Activated naive CD4-positive, alpha-beta T cell treated with anti-CD3 and anti-CD28 coated beads for 36 hours (primary cell): ENCODE measurements at regions of chr5 and their contacts with region 1.

Region 1: GRCh38 chr5:33423018-33423630 is 17.6 kb upstream of the TARS1 start:
- DNase-seq: no peak
- H3K4me3 Mint-ChIP-seq: no peak overlapping the region
- H3K27ac Mint-ChIP-seq: no peak overlapping the region
- H3K4me1 Mint-ChIP-seq: no peaks in the 10 kb centered on the region
- H3K27me3 Mint-ChIP-seq: peaks cover 9% of the 10 kb centered on the region

Region 2: DNA sequence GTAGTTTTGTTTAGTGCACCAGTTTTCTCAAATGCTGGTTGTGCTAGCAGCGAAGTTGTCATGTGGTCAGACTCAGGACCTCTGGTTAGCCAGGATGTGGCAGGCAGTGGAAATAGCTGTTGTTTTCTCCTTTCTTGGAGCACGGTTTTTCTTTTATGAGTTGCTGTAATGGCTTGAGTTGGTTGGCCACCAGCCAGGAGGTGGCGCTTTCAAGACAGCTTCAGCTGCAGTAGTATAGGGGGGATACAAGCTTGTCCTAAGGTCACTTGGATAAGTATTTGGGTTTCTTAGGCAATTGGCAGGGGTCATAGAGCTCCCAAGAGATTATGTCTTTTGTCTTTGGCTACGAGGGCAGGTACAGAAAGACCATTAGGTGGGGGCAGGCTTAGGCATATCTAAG is 256.6 kb before region 1 on chr5:
- CTCF ChIA-PET with region 1: interaction called, 3 read pairs
- intact Hi-C with region 1: loop called (anchors 2 kb)
- DNase-seq: no peak
- H3K4me3 Mint-ChIP-seq: no peak overlapping the region
- H3K27ac Mint-ChIP-seq: no peak overlapping the region
- H3K4me1 Mint-ChIP-seq: no peaks in the 10 kb centered on the region
- H3K27me3 Mint-ChIP-seq: no peaks in the 10 kb centered on the region

Region 3: GRCh38 chr5:33409435-33410170 is 13.5 kb before region 1 on chr5:
- CTCF ChIA-PET with region 1: no interaction called
- intact Hi-C with region 1: no loop called
- DNase-seq: no peak
- H3K4me3 Mint-ChIP-seq: no peak overlapping the region
- H3K27ac Mint-ChIP-seq: no peak overlapping the region
- H3K4me1 Mint-ChIP-seq: no peaks in the 10 kb centered on the region
- H3K27me3 Mint-ChIP-seq: peaks cover 18% of the 10 kb centered on the region

Region 4: GRCh38 chr5:33701251-33701650 is 278.1 kb after region 1 on chr5:
- CTCF ChIA-PET with region 1: no interaction called
- intact Hi-C with region 1: no loop called
- DNase-seq: no peak
- H3K4me3 Mint-ChIP-seq: no peak overlapping the region
- H3K27ac Mint-ChIP-seq: no peak overlapping the region
- H3K4me1 Mint-ChIP-seq: no peaks in the 10 kb centered on the region
- H3K27me3 Mint-ChIP-seq: no peaks in the 10 kb centered on the region